ENCODE measurements at regions of chr9 and their contacts with region 1.

Region 1: DNA sequence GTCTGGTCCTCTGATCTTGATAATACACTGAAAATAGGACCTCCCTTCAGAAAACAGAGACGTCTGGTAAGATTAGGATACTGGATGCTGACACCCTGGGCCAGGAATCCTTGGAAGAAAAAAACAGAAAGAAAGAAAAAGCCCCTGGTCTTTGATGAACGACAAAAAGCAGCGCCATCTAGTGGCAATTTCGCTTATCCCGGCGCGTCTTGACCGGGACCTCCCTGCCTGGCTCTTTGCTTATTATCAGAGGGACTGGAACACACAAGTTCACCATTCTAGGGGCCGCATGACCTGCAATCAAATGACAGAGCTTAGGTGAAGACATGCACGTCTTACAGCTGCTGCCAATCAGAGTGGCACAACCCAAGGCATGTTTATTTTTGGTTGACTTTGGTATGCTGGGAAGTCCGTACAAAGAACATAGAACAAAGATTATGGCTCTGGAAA is 114.9 kb upstream of the NFIB start:
- DNase-seq: peak; percentile 41 to 69
- ATAC-seq: peak; percentile 78 to 89; a peak in 5 of 6 replicates
- H3K4me3 ChIP-seq: no peak overlapping the region
- H3K27ac ChIP-seq: no peak overlapping the region
- H3K4me1 ChIP-seq: peaks cover 9% of the 10 kb centered on the region; the same call in 1 of the 3 replicates
- CTCF ChIP-seq: peak; percentile 86
- EP300 ChIP-seq: no peak
- POLR2A ChIP-seq: no peak
- RAD21 ChIP-seq: peak; percentile 67 to 71

Region 2: DNA sequence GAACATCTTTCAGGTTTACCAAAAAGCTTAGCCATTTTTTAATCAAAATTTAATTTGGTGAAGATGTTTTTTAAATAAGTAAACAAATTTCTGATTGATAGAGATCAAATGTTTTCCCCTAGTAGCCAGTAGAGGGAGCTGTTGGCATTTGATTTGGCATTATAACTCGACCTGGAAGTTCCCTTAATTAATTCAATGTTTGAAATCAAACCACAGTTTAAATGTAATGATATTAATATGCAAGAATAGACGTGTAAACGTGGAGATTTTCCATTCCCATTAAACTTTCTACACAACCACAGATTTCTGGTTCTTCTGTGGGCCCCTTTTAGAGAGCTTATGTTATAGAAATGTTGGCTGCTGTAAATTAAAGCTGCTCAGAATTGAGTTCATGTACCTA is 1001.2 kb before region 1 on chr9:
- CTCF ChIA-PET with region 1: interaction called, 39 read pairs
- POLR2A ChIA-PET with region 1: no interaction called
- DNase-seq: peak; percentile 6 to 48
- ATAC-seq: no peak
- H3K4me3 ChIP-seq: no peak overlapping the region
- H3K27ac ChIP-seq: no peak overlapping the region
- H3K4me1 ChIP-seq: no peaks in the 10 kb centered on the region
- CTCF ChIP-seq: peak; percentile 73
- EP300 ChIP-seq: no peak
- POLR2A ChIP-seq: no peak
- RAD21 ChIP-seq: peak; percentile 65 to 82

Region 3: DNA sequence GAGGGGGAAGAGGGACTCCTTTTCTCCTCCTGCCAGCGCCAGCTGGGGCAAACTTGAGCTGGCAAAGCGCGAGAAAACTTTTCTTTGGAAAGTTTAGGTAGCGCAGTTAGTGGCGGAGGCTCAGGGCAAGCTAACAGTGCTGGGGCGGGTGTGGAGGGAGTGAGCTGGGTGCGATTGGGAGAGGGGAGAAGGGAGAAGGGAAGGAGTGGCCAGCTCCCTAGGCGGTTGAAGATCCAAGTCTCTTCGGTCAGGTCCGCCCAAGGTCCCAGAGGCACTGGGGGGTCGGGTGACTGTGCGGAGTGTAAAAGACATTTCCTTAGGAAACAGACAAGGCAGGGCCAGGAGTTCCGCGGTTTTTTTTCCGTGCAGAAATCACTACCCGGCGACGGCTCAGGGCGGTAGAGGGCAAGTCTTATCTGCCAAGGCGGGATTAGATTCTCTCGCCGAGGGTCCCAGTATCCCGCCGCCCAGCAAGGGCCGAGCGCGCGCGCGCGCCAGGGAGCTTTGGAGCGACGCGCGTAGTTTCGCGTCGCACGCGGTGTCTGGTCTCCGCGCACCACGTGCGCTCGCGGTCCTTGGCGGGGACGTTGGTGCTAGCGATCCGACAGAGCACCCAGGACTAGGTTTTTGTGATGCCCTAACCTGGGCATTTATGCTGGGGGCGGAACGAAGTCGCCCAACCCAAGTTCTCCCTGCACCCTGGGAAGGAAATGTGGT is 81.2 kb before region 1 on chr9:
- CTCF ChIA-PET with region 1: interaction called, 18 read pairs
- POLR2A ChIA-PET with region 1: no interaction called
- DNase-seq: peak; percentile 52 to 68
- ATAC-seq: peak; percentile 79 to 86
- H3K4me3 ChIP-seq: peak overlapping the region; percentile 55
- H3K27ac ChIP-seq: peak overlapping the region; percentile 59 to 83
- H3K4me1 ChIP-seq: peaks cover 10% of the 10 kb centered on the region; the same call in 1 of the 3 replicates
- CTCF ChIP-seq: peak; percentile 46; the same call in 2 of the 3 replicates
- EP300 ChIP-seq: no peak
- POLR2A ChIP-seq: peak; percentile 43
- RAD21 ChIP-seq: peak in 1 of 2 experiments; percentile 48; a peak in 2 of 5 replicates

Region 4: GRCh38 chr9:14406463-14406862 is 22.3 kb before region 1 on chr9:
- CTCF ChIA-PET with region 1: interaction called, 12 read pairs
- POLR2A ChIA-PET with region 1: no interaction called
- DNase-seq: no peak
- ATAC-seq: no peak
- H3K4me3 ChIP-seq: no peak overlapping the region
- H3K27ac ChIP-seq: no peak overlapping the region
- H3K4me1 ChIP-seq: no peaks in the 10 kb centered on the region
- CTCF ChIP-seq: no peak
- EP300 ChIP-seq: no peak
- POLR2A ChIP-seq: no peak
- RAD21 ChIP-seq: no peak

Region 5: GRCh38 chr9:14415947-14416346 is 12.9 kb before region 1 on chr9:
- CTCF ChIA-PET with region 1: interaction called, 14 read pairs
- POLR2A ChIA-PET with region 1: no interaction called
- DNase-seq: no peak
- ATAC-seq: no peak
- H3K4me3 ChIP-seq: no peak overlapping the region
- H3K27ac ChIP-seq: no peak overlapping the region
- H3K4me1 ChIP-seq: no peaks in the 10 kb centered on the region
- CTCF ChIP-seq: no peak
- EP300 ChIP-seq: no peak
- POLR2A ChIP-seq: no peak
- RAD21 ChIP-seq: no peak

Region 6: DNA sequence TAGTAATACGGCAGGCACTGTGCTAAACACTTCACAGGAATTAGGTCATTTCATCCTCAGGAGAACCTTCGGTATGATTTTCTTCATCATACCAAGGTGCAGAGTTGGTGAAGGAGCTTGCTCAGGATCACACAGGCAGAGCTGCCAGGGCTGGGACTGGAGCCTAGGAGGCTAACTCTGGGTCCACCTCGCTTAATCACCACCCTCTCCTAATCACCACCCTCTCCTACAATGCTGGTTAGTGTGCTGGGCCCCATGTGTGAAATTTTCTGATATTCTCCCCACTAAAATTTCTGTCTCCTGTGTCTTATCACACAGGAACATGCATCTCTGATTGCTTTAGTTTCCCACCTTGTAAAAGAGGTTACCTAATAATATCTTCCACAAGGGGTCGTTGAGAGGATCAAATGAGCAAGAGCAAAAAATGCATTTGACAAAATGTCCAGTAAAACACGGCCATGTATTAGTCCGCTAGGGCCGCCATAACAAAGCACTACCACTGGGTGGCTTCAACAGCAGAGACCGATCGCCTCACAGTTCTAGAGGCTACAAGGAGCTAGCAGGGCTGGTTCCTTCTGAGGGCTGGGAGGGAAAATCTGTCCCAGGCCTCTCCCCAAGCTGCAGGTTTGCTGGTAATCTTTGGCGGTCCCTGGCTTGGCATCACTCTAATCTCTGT is 13.3 kb after region 1 on chr9:
- CTCF ChIA-PET with region 1: interaction called, 14 read pairs
- POLR2A ChIA-PET with region 1: no interaction called
- DNase-seq: peak; percentile 45 to 82
- ATAC-seq: peak; percentile 96 to 99
- H3K4me3 ChIP-seq: no peak overlapping the region
- H3K27ac ChIP-seq: no peak overlapping the region
- H3K4me1 ChIP-seq: peaks cover 3% of the 10 kb centered on the region; the same call in 1 of the 3 replicates
- CTCF ChIP-seq: peak; percentile 54
- EP300 ChIP-seq: no peak
- POLR2A ChIP-seq: no peak
- RAD21 ChIP-seq: peak; percentile 46 to 47

Measured in A549 (cell line).